ENCODE measurements at regions of chr5 and their contacts with region 1.

Region 1: DNA sequence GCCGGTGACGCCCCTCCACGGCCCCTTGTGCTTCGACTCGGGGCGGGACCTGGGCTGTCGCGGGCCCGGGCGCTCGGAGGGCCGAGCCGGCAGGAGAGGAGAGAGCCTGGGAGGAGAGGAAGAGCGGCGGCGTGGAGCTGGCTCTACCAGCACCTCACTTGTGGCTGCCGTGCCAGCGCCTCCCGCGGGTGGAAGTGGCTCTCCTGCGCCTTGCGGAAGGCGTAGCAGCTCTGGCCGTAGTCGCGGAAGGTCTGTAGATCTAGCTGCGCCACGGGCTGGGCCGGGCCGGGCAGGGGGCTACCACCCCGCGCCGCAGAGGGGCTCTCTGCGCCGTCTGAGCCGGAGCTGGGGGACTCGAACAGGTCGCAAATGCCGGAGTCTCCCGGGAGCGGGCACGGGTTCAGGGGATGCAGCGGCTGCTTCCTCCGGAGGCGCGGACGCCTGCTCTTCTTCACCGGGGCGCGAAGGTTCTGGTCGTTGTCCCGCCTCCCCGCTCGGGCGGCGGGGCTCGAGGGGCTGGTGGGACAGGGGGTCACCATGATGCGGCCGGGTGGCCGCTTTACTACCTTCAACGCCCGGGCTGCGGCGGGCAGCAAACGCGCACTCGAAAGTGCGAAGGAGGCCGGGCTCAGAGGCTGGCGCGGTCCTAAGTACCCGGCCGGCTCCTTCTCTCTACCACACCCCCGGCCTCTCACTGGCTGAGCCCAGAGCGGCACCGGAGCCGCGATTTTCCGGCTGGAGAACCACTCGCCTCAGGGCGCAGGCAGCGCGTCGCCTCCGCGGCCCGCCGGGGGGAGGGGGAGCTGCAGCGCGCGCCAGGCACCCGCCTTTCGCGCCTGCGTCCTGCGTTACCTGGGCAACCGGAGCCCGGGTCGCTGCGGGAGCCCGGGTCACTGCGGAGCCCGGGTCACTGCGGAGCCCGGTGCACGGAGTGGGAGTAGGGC is at the start of gene CCNO:
- DNase-seq: peak; percentile 62
- H3K4me3 Mint-ChIP-seq: peak within 1 kb of the TSS; percentile 68
- H3K27ac Mint-ChIP-seq: peak within 1 kb of the TSS; percentile 33
- H3K4me1 Mint-ChIP-seq: peaks cover 25% of the 10 kb centered on the region
- H3K27me3 Mint-ChIP-seq: peaks cover 78% of the 10 kb centered on the region
- total RNA-seq, gene CCNO: not detected

Region 2: GRCh38 chr5:55220391-55221185 is 12.7 kb before region 1 on chr5:
- CTCF ChIA-PET with region 1: interaction called, 16 read pairs
- POLR2A ChIA-PET with region 1: no interaction called
- DNase-seq: no peak
- H3K4me3 Mint-ChIP-seq: peak overlapping the region; percentile 26
- H3K27ac Mint-ChIP-seq: no peak overlapping the region
- H3K4me1 Mint-ChIP-seq: peaks cover 33% of the 10 kb centered on the region
- H3K27me3 Mint-ChIP-seq: peaks cover 74% of the 10 kb centered on the region

Region 3: DNA sequence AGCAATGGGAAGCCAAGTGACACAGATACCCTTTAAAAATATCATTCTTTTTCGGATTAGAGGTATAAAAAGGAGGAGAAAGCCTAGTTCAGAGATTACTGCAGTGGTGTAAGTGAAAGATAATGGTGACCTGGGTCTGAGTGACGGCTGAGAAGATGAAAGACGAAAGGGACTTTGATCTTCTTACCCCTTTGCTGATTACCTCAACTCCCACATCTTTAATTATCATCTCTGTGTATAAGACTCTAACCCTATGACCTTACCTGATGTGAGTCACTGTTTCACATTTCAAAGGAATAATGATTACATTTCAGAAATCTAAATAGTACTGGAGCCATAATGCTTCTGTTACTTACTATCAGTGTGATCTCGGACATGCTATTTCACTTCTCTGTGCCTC is 21.5 kb after region 1 on chr5:
- CTCF ChIA-PET with region 1: no interaction called
- POLR2A ChIA-PET with region 1: no interaction called
- DNase-seq: no peak
- H3K4me3 Mint-ChIP-seq: no peak overlapping the region
- H3K27ac Mint-ChIP-seq: no peak overlapping the region
- H3K4me1 Mint-ChIP-seq: no peaks in the 10 kb centered on the region
- H3K27me3 Mint-ChIP-seq: no peaks in the 10 kb centered on the region

Region 4: GRCh38 chr5:55307383-55308253 is 74.4 kb after region 1 on chr5 and contains the starts of genes DHX29 and MTREX:
- CTCF ChIA-PET with region 1: interaction called, 5 read pairs
- POLR2A ChIA-PET with region 1: interaction called, 18 read pairs
- DNase-seq: peak; percentile 91
- H3K4me3 Mint-ChIP-seq: no peak within 1 kb of the TSS
- H3K27ac Mint-ChIP-seq: no peak within 1 kb of the TSS
- H3K4me1 Mint-ChIP-seq: peaks cover 26% of the 10 kb centered on the region
- H3K27me3 Mint-ChIP-seq: no peaks in the 10 kb centered on the region
- total RNA-seq, gene DHX29: 18.7 to 19.3 TPM
- total RNA-seq, gene MTREX: 71.8 to 76.1 TPM